Endothelial cell of umbilical vein (primary cell): ENCODE measurements at regions of chr11 and their contacts with region 1.

Region 1: DNA sequence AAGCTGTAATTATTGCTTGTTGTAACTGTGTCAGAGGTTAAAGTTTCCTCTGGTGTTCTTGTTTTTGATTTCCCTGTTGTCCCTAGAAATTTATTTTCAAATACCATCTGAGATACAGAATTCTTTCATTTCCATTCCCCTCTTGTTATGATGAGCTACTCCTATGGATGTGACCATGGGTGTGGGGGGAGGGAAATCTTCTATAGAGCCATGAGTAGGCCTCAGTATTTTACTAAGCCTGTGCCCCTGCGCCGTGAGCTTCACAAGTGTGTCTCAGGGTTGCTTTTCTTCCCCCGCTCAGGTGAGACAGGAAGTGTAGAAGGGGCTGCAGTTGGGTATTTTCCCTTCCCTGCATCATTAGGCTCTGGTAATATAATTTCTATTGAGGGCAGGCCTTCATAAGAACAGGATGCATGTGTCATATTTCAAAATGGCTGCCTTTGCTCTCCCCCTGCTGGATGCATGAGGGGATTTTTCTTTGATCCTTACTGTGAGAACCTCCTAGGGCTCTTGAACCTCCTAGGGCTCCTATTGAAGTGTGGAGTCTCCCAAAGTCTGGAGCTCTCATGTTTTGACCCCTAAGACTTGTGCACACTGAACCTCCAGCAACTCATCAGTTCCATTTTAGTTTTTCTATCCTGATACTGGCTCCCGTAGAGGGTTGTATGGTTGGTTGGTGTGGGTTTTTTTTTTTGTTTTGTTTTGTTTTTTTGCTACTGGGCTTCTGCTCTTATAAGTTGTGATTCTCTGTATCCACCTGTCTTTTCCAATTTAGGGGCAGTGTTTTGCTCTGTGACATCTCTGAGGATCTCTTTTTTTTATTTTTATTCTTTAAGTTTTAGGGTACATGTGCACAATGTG is 658.2 kb downstream of the NTM start:
- DNase-seq: peak; percentile 74
- H3K4me3 ChIP-seq: no peak overlapping the region
- H3K27ac ChIP-seq: no peak overlapping the region
- H3K4me1 ChIP-seq: peaks cover 13% of the 10 kb centered on the region
- H3K27me3 ChIP-seq: no peaks in the 10 kb centered on the region
- CTCF ChIP-seq: peak; percentile 61 to 65
- POLR2A ChIP-seq: no peak

Region 2: DNA sequence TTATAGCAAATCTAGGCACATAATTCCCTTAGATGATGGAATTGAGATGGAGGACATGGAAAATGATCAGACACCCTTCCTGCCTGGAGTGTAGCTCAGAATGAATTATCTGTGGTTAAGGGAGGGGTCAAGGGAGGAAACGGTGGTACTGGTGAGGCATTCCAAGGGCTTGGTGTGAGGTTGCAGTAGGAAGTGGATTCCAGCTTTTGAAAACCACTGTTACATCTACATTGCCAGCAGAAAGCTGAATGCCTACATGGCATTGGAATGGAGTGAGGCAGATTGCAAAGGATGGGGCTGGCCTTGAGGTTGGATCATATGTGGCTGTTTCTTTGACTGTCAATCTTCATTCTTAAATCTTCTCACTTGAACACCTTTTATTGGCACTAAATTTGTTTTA is 26.2 kb after region 1 on chr11:
- CTCF ChIA-PET with region 1: no interaction called
- POLR2A ChIA-PET with region 1: no interaction called
- dilution Hi-C with region 1: no loop called
- intact Hi-C with region 1: no loop called
- DNase-seq: no peak
- H3K4me3 ChIP-seq: no peak overlapping the region
- H3K27ac ChIP-seq: no peak overlapping the region
- H3K4me1 ChIP-seq: peaks cover 12% of the 10 kb centered on the region
- H3K27me3 ChIP-seq: no peaks in the 10 kb centered on the region
- CTCF ChIP-seq: no peak
- POLR2A ChIP-seq: no peak

Region 3: DNA sequence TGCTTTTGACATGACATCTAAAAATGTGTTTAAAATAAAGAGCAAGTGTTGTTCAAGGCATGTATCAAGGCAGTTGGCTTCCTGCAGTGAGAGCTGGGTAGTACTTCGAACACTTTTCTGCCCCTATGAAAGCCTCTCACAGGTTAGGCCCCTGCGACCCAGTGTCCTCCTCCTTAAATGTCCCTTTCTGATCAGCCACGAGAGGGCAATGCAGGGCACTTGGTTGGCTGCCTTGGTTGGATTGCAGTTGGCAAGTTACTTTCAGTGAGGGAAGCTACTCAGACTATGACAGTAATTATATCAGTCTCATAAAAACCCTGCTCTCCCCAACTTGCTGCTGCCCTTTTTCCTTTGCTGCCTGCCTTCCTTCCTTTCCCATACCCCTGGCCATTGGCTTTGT is 85.6 kb after region 1 on chr11:
- CTCF ChIA-PET with region 1: interaction called, 4 read pairs
- POLR2A ChIA-PET with region 1: no interaction called
- dilution Hi-C with region 1: no loop called
- intact Hi-C with region 1: loop called (anchors 5 kb)
- DNase-seq: peak; percentile 44
- H3K4me3 ChIP-seq: no peak overlapping the region
- H3K27ac ChIP-seq: no peak overlapping the region
- H3K4me1 ChIP-seq: peaks cover 9% of the 10 kb centered on the region
- H3K27me3 ChIP-seq: no peaks in the 10 kb centered on the region
- CTCF ChIP-seq: peak in 1 of 2 donors; percentile 53
- POLR2A ChIP-seq: no peak